H1 (cell line): ENCODE measurements at regions of chr11 and their contacts with region 1.

Region 1: GRCh38 chr11:27406498-27407354 is 43.7 kb upstream of the CCDC34 start:
- DNase-seq: no peak
- H3K4me3 ChIP-seq: no peak overlapping the region
- H3K27ac ChIP-seq: no peak overlapping the region
- H3K4me1 ChIP-seq: peaks cover 0 to 2% (median 0%) of the 10 kb centered on the region in 4 experiments; a peak in 2 of 7 replicates
- H3K27me3 ChIP-seq: no peaks in the 10 kb centered on the region
- CTCF ChIP-seq: no peak
- EP300 ChIP-seq: no peak
- POLR2A ChIP-seq: no peak
- RAD21 ChIP-seq: no peak

Region 2: DNA sequence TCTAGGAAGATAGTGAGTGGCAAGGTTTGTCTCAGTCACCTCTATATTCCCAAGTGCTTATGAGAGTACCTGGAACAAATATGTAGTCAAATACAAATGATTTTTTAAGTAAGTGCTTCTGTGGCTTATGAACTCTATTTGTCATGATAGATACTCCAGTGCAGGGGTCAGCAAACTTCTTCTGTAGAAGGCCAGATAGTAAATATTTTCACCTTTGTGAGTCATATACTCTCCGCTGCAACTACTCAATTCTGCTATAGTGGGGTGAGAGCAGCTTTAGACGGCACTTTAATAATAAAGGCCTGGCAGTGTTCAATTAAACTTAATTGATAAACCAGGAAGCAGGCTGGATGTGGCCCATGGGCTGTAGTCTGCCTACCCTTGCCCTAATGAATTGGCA is 31.4 kb before region 1 on chr11:
- CTCF ChIA-PET with region 1: no interaction called
- POLR2A ChIA-PET with region 1: no interaction called
- DNase-seq: no peak
- H3K4me3 ChIP-seq: no peak overlapping the region
- H3K27ac ChIP-seq: no peak overlapping the region
- H3K4me1 ChIP-seq: no peaks in the 10 kb centered on the region
- H3K27me3 ChIP-seq: no peaks in the 10 kb centered on the region
- CTCF ChIP-seq: no peak
- EP300 ChIP-seq: no peak
- POLR2A ChIP-seq: no peak
- RAD21 ChIP-seq: no peak

Region 3: GRCh38 chr11:27395556-27396260 is 11.0 kb before region 1 on chr11:
- CTCF ChIA-PET with region 1: interaction called, 8 read pairs
- POLR2A ChIA-PET with region 1: interaction called, 15 read pairs
- DNase-seq: no peak
- H3K4me3 ChIP-seq: no peak overlapping the region
- H3K27ac ChIP-seq: no peak overlapping the region
- H3K4me1 ChIP-seq: peaks cover 2 to 20% (median 16%) of the 10 kb centered on the region in 4 experiments; a peak in 6 of 7 replicates
- H3K27me3 ChIP-seq: no peaks in the 10 kb centered on the region
- CTCF ChIP-seq: no peak
- EP300 ChIP-seq: no peak
- POLR2A ChIP-seq: no peak
- RAD21 ChIP-seq: no peak

Region 4: DNA sequence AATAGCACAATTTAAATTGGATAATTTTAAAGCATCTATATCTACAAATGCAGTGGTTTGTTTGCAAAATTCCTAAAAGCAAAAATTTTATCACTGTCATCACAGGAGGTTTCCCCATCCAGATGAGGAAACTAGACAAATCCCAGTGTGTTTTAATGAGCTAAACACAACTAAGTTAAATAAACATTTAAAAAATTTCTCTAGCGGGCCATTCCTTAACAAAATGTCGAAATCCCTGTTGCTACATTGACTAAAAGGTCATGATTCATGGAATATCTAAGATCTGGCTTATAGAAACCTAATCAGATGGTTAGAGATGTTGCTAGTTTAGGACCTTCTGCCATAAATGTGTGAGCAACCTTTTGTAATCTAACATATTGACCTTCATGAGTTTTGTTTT is 400.9 kb after region 1 on chr11:
- CTCF ChIA-PET with region 1: no interaction called
- POLR2A ChIA-PET with region 1: no interaction called
- DNase-seq: no peak
- H3K4me3 ChIP-seq: no peak overlapping the region
- H3K27ac ChIP-seq: no peak overlapping the region
- H3K4me1 ChIP-seq: no peaks in the 10 kb centered on the region
- H3K27me3 ChIP-seq: no peaks in the 10 kb centered on the region
- CTCF ChIP-seq: no peak
- EP300 ChIP-seq: no peak
- POLR2A ChIP-seq: no peak
- RAD21 ChIP-seq: no peak